ENCODE measurements at regions of chr16 and their contacts with region 1.

Region 1: GRCh38 chr16:83701494-83701893 is 106.3 kb upstream of the HSBP1 start:
- DNase-seq: peak; percentile 25
- H3K4me3 ChIP-seq: no peak overlapping the region
- H3K27ac ChIP-seq: no peak overlapping the region
- H3K4me1 ChIP-seq: no peaks in the 10 kb centered on the region
- H3K27me3 ChIP-seq: no peaks in the 10 kb centered on the region
- CTCF ChIP-seq: no peak

Region 2: GRCh38 chr16:83652943-83653342 is 48.6 kb before region 1 on chr16:
- CTCF ChIA-PET with region 1: no interaction called
- dilution Hi-C with region 1: no loop called
- in situ Hi-C with region 1: no loop called
- intact Hi-C with region 1: loop called (anchors 1 kb)
- DNase-seq: no peak
- H3K4me3 ChIP-seq: no peak overlapping the region
- H3K27ac ChIP-seq: no peak overlapping the region
- H3K4me1 ChIP-seq: no peaks in the 10 kb centered on the region
- H3K27me3 ChIP-seq: no peaks in the 10 kb centered on the region
- CTCF ChIP-seq: no peak

Measured in mammary epithelial cell (primary cell).